ENCODE measurements at regions of chr12 and their contacts with region 1.

Region 1: GRCh38 chr12:109625131-109625559 is 51.6 kb downstream of the MVK start:
- DNase-seq: peak; percentile 86 to 90
- ATAC-seq: peak; percentile 94 to 95
- H3K4me3 ChIP-seq: no peak overlapping the region
- H3K27ac ChIP-seq: peak overlapping the region in 2 of 4 donors; percentile 35 to 47
- H3K4me1 ChIP-seq: no peaks in the 10 kb centered on the region
- H3K27me3 ChIP-seq: peaks cover 0 to 4% (median 0%) of the 10 kb centered on the region in 3 donors
- CTCF ChIP-seq: peak in 3 of 5 experiments; percentile 15 to 24 (median 16)
- POLR2A ChIP-seq: no peak

Region 2: GRCh38 chr12:109653890-109654289 is 28.7 kb after region 1 on chr12:
- in situ Hi-C with region 1: no loop called
- intact Hi-C with region 1: loop called (anchors 1 kb)
- DNase-seq: no peak
- ATAC-seq: peak; percentile 85 to 95
- H3K4me3 ChIP-seq: peak overlapping the region in 1 of 4 donors; percentile 22
- H3K27ac ChIP-seq: peak overlapping the region in 3 of 4 donors; percentile 12 to 47 (median 26)
- H3K4me1 ChIP-seq: peaks cover 10 to 11% of the 10 kb centered on the region in 2 donors
- H3K27me3 ChIP-seq: no peaks in the 10 kb centered on the region
- CTCF ChIP-seq: no peak
- POLR2A ChIP-seq: no peak

Region 3: DNA sequence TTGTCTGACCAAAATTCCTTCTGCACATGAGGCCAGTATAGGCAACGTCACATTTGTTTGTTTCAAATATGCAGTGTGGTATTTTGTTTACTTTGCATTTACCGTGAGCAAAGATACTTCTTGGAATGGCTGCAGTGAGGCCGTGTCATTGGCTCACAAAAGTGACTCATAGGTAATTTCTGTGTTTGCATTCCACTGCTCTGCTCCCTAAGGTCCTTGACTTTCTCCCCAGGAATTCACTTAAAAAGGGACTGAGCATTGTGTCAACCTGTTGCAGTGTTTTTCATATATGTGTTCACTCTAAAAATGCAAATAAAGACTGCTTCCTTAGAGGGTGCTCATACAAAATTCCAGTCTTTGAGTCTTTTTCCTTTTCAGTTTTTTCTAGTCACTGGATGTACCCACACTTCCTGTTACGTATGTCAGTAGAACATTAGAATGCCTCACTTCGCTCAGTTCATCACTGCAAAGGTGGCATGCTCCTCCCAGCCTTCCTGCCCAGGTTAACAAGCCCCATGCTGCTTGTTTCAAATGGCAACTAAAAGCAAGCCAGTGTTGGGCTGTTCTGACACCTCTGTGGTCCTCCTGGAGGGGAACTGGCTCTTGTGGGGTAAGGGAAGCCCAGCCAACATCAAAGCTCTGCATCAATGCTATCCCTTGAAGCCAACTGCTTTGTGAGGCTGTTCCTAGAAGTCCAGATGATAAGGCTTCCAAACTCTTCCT is 414.1 kb after region 1 on chr12:
- in situ Hi-C with region 1: no loop called
- intact Hi-C with region 1: no loop called
- DNase-seq: no peak
- ATAC-seq: peak; percentile 25 to 35
- H3K4me3 ChIP-seq: no peak overlapping the region
- H3K27ac ChIP-seq: peak overlapping the region; percentile 41 to 63 (median 52)
- H3K4me1 ChIP-seq: peaks cover 47 to 54% of the 10 kb centered on the region in 2 donors
- H3K27me3 ChIP-seq: no peaks in the 10 kb centered on the region
- CTCF ChIP-seq: no peak
- POLR2A ChIP-seq: no peak

Measured in gastrocnemius medialis (tissue), 4 donors.